Activated CD4-positive, alpha-beta memory T cell treated with anti-CD3 and anti-CD28 coated beads, Interleukin-2, amount 10 ng/mL, durations not matched to agents 7 days and 5 days (primary cell): ENCODE measurements at regions of chr7 and their contacts with region 1.

Region 1: DNA sequence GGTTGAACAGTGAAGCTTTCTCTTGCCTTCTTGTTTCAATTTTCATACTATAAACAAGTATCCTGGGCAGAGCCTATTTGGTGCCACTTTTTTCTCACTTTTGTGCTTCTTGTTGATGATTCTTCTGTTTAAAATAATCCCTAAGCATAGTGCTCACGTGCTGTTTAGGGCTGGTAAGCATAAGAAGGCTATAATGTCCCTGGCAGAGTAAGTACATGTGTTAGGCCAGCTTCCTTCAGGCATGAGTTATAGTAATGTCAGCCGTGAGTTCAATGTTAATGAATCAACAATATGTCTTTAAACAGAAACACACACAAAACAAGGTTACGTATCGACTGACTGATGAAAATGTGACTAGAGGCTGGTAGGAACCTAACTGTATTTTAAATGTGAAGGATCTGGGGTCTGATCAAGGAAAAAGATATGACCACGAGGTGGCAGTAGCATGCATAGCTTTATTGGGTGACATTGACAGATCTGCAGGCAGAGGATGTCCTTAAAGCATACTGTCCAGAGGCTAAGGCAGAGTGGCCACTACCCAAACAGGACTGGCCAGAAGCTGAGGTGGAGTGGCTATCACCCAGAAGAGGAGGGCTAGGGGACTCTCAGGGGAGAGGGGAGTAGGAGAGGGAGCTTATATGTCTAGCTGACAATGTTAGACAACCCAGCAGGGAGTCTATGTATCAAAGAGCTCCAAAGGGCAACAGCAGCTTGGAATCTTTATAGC is 113.7 kb downstream of the BRAF start:
- DNase-seq: peak; percentile 59
- H3K4me3 Mint-ChIP-seq: no peak overlapping the region
- H3K27ac Mint-ChIP-seq: no peak overlapping the region
- H3K4me1 Mint-ChIP-seq: no peaks in the 10 kb centered on the region
- H3K27me3 Mint-ChIP-seq: no peaks in the 10 kb centered on the region

Region 2: DNA sequence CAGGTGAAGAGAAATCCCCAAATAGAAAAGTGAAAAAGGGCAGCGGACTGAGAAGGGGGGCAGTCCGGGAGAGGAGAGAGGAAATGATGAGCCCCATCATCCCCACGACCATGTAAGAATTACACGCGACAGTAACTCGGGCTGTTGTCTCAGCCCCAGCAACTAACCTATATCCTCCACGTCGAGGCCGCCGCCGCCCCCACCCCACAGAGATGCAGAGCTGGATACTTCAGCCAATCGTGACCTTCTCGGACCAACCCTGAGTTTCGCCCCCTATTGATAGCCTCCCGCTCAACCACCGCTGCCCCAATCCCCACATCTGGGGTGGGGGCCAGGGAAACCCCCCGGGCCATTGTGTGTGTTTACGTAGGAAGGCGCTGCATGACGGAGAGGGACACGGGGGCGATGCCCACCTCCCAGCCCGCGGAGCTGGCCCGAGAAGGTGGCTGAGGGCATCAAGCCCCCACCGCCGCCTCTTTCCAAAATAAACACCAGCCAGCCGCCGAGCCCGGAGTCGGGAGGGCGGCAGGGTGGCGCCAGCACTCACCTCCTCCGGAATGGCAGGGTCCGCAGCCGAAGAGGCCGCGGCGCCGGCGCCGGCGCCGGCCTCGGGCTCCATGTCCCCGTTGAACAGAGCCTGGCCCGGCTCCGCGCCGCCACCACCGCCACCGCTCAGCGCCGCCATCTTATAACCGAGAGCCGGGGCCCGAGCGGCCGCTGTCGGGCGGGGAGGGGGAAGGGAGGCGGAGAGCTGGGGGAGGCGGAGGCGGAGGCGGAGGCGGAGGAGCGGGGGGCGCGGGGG is 113.2 kb after region 1 on chr7:
- CTCF ChIA-PET with region 1: interaction called, 11 read pairs
- POLR2A ChIA-PET with region 1: interaction called, 6 read pairs
- DNase-seq: peak; percentile 79
- H3K4me3 Mint-ChIP-seq: no peak overlapping the region
- H3K27ac Mint-ChIP-seq: no peak overlapping the region
- H3K4me1 Mint-ChIP-seq: peaks cover 13% of the 10 kb centered on the region
- H3K27me3 Mint-ChIP-seq: no peaks in the 10 kb centered on the region

Region 3: DNA sequence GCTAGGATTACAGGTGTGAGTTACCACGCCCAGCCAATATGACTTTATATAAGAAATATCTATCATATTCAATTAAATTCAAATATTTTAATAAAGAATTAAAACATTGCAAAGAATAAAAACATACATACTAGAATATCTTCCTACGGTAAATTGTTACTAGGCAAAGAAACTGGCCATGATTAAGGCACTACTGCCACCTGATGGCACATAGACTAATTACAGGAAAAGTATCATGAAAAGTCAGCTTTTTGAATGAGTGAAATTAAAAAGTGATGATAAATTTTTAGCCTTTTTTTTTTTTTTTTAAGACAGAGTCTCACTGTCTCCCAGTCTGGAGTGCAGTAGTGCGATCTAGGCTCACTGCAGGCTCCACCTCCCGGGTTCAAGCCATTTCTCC is 172.8 kb after region 1 on chr7:
- CTCF ChIA-PET with region 1: interaction called, 40 read pairs
- POLR2A ChIA-PET with region 1: no interaction called
- DNase-seq: no peak
- H3K4me3 Mint-ChIP-seq: no peak overlapping the region
- H3K27ac Mint-ChIP-seq: no peak overlapping the region
- H3K4me1 Mint-ChIP-seq: peaks cover 2% of the 10 kb centered on the region
- H3K27me3 Mint-ChIP-seq: peaks cover 22% of the 10 kb centered on the region

Region 4: DNA sequence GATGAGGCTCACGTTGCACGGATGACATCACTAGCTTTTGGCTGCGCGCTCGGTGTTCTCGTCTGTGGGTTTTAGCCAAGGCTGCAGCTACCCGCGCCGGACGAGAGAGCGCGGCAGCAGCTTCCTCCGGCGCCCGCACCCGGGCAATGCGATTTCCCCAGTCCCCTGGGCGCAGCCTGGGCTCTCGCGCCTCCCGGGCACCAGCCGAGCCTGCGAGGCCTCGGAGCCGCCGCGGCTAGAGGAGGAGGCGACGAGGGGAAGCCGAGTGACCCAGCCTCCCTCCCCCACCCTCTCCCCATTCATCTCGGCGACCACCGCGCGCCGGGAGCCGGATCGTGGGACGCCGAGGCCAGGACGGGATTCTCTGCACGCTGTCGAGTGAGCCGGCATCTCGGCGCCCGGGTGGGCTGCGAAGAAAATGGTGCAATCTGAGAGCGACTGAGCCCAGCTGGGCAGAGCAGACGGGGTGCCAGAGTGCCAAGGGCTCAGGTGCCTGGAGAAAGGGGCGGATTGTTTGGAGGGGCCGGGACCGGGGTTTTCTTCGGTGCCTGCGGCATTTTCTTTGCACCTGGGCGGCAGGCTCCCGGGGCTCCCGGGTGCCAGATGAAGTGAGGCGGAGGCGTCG is 261.7 kb after region 1 on chr7:
- CTCF ChIA-PET with region 1: no interaction called
- POLR2A ChIA-PET with region 1: no interaction called
- DNase-seq: peak; percentile 55
- H3K4me3 Mint-ChIP-seq: peak overlapping the region; percentile 67
- H3K27ac Mint-ChIP-seq: no peak overlapping the region
- H3K4me1 Mint-ChIP-seq: peaks cover 23% of the 10 kb centered on the region
- H3K27me3 Mint-ChIP-seq: peaks cover 46% of the 10 kb centered on the region